HCT116 (cell line): ENCODE measurements at regions of chr11 and their contacts with region 1.

Region 1: GRCh38 chr11:64688534-64688982 is 34.4 kb downstream of the NRXN2 start:
- DNase-seq: peak; percentile 83
- ATAC-seq: peak; percentile 97
- H3K4me3 ChIP-seq: peak overlapping the region; percentile 27 to 49
- H3K27ac ChIP-seq: no peak overlapping the region
- H3K4me1 ChIP-seq: peaks cover 0 to 11% of the 10 kb centered on the region in 2 experiments; a peak in 2 of 4 replicates
- H3K27me3 ChIP-seq: no peaks in the 10 kb centered on the region
- CTCF ChIP-seq: peak; percentile 91 to 98 (median 93)
- POLR2A ChIP-seq: no peak
- RAD21 ChIP-seq: peak; percentile 76

Region 2: GRCh38 chr11:64448599-64449556 is 239.7 kb before region 1 on chr11:
- CTCF ChIA-PET with region 1: interaction called, 14 read pairs
- POLR2A ChIA-PET with region 1: no interaction called
- RAD21 ChIA-PET with region 1: interaction called in 1 of 2 experiments, 4 read pairs
- intact Hi-C with region 1: no loop called
- DNase-seq: peak; percentile 72
- ATAC-seq: peak; percentile 92
- H3K4me3 ChIP-seq: peak overlapping the region; percentile 48 to 59
- H3K27ac ChIP-seq: no peak overlapping the region; the same call in 1 of the 2 replicates
- H3K4me1 ChIP-seq: peaks cover 14 to 23% of the 10 kb centered on the region in 2 experiments
- H3K27me3 ChIP-seq: no peaks in the 10 kb centered on the region
- CTCF ChIP-seq: peak; percentile 88 to 94 (median 91)
- POLR2A ChIP-seq: no peak
- RAD21 ChIP-seq: peak; percentile 75

Region 3: DNA sequence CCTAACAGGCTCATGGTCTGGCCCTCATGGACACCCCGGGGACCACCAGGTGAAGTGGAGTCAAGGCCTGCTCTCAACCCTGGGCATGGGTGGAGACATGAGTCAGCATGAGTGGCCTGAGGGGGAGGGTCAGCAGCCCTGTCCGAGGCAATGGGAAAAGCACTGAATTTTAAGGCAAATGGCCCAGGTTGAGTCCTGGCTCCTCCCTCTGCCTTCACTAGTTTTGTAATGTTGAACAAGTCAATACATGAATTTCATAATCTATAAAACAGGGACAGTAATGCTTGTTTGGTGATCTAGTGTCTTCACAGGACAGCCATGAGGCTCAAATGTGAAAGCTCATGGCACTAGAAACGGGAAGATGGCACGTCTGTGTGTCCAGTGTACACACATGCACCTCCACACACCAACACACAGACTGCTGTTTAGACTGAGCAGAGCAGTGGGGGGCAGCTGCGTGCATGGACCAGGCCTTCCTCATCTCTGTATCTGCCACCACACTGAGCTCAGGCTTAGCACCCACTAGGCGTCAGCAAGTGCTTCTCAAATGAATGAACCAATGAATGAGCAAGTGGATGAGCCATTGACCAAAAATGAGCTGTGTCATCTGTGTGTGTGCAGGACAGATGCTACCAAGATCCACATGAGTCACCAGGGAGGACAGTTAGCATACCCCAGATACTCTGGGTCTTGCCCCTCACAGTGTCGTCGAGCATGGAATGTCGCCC is 29.0 kb before region 1 on chr11:
- CTCF ChIA-PET with region 1: interaction called, 16 read pairs
- POLR2A ChIA-PET with region 1: no interaction called
- RAD21 ChIA-PET with region 1: interaction called in 1 of 2 experiments, 3 read pairs
- intact Hi-C with region 1: no loop called
- DNase-seq: peak; percentile 81
- ATAC-seq: peak; percentile 90
- H3K4me3 ChIP-seq: peak overlapping the region in 1 of 2 experiments; percentile 20; a peak in 1 of 4 replicates
- H3K27ac ChIP-seq: peak overlapping the region; percentile 34
- H3K4me1 ChIP-seq: peaks cover 8 to 29% of the 10 kb centered on the region in 2 experiments
- H3K27me3 ChIP-seq: no peaks in the 10 kb centered on the region
- CTCF ChIP-seq: no peak
- POLR2A ChIP-seq: no peak
- RAD21 ChIP-seq: peak; percentile 51

Region 4: DNA sequence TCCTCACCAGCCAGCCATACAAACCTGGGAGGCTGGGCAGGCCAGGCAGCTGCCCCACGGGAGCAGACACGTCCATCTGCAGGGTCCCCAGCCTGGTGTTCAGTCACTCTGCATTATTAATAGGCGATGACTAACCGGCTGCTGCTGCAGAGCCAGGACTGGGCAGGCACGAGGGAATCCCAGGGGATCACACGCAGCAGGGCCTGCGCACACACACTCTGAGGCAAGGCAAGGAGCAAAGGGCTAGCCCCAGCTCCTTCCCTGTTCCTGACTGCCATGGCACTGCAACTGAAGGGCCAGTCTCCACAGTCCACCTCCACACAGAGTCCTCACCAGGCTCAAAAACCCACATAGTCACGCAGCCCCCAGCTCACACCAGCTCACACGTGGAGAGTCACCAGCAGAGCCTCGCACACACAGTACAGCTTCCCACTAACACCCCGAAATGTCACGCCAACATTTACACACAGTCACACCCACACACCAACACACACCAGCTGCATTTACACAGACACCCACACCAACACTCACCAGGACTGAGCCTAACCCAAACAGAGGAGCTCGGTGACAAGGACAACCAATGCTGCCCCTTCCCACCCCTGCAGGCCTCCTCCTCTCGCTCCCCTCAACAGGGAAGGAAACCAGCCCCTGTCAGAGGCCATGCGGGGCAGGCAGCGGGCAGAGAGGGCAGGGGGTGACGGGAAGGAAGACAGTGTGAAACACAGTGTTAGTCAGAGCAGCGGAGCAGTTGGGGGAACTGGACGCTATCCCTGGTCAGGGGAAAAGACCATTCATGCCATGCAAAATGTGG is 12.9 kb before region 1 on chr11:
- CTCF ChIA-PET with region 1: interaction called, 20 read pairs
- POLR2A ChIA-PET with region 1: no interaction called
- RAD21 ChIA-PET with region 1: no interaction called
- intact Hi-C with region 1: no loop called
- DNase-seq: no peak
- ATAC-seq: no peak
- H3K4me3 ChIP-seq: no peak overlapping the region
- H3K27ac ChIP-seq: no peak overlapping the region
- H3K4me1 ChIP-seq: peaks cover 0 to 15% of the 10 kb centered on the region in 2 experiments; a peak in 1 of 4 replicates
- H3K27me3 ChIP-seq: peaks cover 48% of the 10 kb centered on the region; the same call in 1 of the 2 replicates
- CTCF ChIP-seq: no peak
- POLR2A ChIP-seq: no peak
- RAD21 ChIP-seq: no peak

Region 5: GRCh38 chr11:64703048-64703447 is 14.5 kb after region 1 on chr11:
- CTCF ChIA-PET with region 1: interaction called, 50 read pairs
- POLR2A ChIA-PET with region 1: no interaction called
- RAD21 ChIA-PET with region 1: interaction called in 1 of 2 experiments, 5 read pairs
- intact Hi-C with region 1: no loop called
- DNase-seq: no peak
- ATAC-seq: no peak
- H3K4me3 ChIP-seq: no peak overlapping the region
- H3K27ac ChIP-seq: no peak overlapping the region
- H3K4me1 ChIP-seq: no peaks in the 10 kb centered on the region
- H3K27me3 ChIP-seq: peaks cover 11% of the 10 kb centered on the region
- CTCF ChIP-seq: no peak
- POLR2A ChIP-seq: no peak
- RAD21 ChIP-seq: no peak

Region 6: GRCh38 chr11:64713031-64713780 is 24.6 kb after region 1 on chr11:
- CTCF ChIA-PET with region 1: interaction called, 11 read pairs
- POLR2A ChIA-PET with region 1: interaction called, 4 read pairs
- RAD21 ChIA-PET with region 1: no interaction called
- intact Hi-C with region 1: no loop called
- DNase-seq: no peak
- ATAC-seq: no peak
- H3K4me3 ChIP-seq: no peak overlapping the region
- H3K27ac ChIP-seq: no peak overlapping the region
- H3K4me1 ChIP-seq: peaks cover 7 to 23% of the 10 kb centered on the region in 2 experiments; a peak in 3 of 4 replicates
- H3K27me3 ChIP-seq: peaks cover 5% of the 10 kb centered on the region; the same call in 1 of the 2 replicates
- CTCF ChIP-seq: no peak
- POLR2A ChIP-seq: no peak
- RAD21 ChIP-seq: no peak

Region 7: GRCh38 chr11:64723117-64723906 is 34.8 kb after region 1 on chr11 and contains the start of gene NRXN2:
- CTCF ChIA-PET with region 1: interaction called, 6 read pairs
- POLR2A ChIA-PET with region 1: no interaction called
- RAD21 ChIA-PET with region 1: no interaction called
- intact Hi-C with region 1: loop called (anchors 1 kb)
- DNase-seq: peak; percentile 53
- ATAC-seq: peak; percentile 99
- H3K4me3 ChIP-seq: peak within 1 kb of the TSS; percentile 37 to 58
- H3K27ac ChIP-seq: no peak within 1 kb of the TSS; the same call in 1 of the 2 replicates
- H3K4me1 ChIP-seq: peaks cover 0 to 10% of the 10 kb centered on the region in 2 experiments; a peak in 1 of 4 replicates
- H3K27me3 ChIP-seq: 0 out of 2 replicates have a peak, but pooled peaks cover 6% of the 10 kb centered on the region
- CTCF ChIP-seq: peak; percentile 88 to 98 (median 96)
- POLR2A ChIP-seq: no peak
- RAD21 ChIP-seq: peak; percentile 80
- total RNA-seq, gene NRXN2: 1.5 TPM

Region 8: DNA sequence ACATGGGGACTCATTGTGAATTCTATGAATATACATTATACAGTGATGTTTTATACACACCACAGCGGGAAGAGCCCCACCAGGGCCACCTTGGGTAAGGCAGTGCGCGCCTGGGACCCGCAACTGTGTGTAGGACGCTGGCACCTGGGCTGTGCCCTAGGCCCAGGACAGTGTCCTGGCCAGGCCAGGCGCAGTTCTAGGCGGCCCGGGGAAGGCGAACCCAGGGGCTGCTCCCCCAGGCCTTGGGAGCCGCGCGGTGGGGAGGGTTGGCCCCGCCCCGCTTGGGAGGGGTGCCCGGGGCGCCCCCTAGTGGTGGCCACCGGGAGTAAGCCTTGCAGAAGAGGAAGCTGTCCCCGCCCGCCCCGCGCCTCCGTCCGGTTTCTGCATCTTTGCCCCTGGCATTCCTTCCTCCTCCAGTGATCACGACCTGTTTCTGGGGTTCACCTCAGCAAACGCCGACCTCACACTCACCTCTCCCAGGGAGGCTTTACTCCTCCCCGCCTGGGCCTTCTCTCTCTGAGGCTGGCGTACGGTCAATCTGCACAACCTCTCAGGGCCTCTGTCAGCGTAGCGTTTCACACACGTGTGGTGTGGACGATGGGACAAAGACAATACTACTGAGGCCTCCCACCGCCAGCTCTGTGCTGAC is 199.3 kb after region 1 on chr11:
- CTCF ChIA-PET with region 1: no interaction called
- POLR2A ChIA-PET with region 1: no interaction called
- RAD21 ChIA-PET with region 1: no interaction called
- intact Hi-C with region 1: no loop called
- DNase-seq: peak; percentile 39
- ATAC-seq: peak; percentile 92
- H3K4me3 ChIP-seq: peak overlapping the region; percentile 31 to 51
- H3K27ac ChIP-seq: peak overlapping the region; percentile 40
- H3K4me1 ChIP-seq: peaks cover 7 to 31% of the 10 kb centered on the region in 2 experiments; a peak in 3 of 4 replicates
- H3K27me3 ChIP-seq: no peaks in the 10 kb centered on the region
- CTCF ChIP-seq: peak; percentile 83 to 93 (median 88)
- POLR2A ChIP-seq: peak; percentile 40
- RAD21 ChIP-seq: peak; percentile 63